Sciatic nerve (tissue), 2 donors: ENCODE measurements at regions of chr6 and their contacts with region 1.

Region 1: DNA sequence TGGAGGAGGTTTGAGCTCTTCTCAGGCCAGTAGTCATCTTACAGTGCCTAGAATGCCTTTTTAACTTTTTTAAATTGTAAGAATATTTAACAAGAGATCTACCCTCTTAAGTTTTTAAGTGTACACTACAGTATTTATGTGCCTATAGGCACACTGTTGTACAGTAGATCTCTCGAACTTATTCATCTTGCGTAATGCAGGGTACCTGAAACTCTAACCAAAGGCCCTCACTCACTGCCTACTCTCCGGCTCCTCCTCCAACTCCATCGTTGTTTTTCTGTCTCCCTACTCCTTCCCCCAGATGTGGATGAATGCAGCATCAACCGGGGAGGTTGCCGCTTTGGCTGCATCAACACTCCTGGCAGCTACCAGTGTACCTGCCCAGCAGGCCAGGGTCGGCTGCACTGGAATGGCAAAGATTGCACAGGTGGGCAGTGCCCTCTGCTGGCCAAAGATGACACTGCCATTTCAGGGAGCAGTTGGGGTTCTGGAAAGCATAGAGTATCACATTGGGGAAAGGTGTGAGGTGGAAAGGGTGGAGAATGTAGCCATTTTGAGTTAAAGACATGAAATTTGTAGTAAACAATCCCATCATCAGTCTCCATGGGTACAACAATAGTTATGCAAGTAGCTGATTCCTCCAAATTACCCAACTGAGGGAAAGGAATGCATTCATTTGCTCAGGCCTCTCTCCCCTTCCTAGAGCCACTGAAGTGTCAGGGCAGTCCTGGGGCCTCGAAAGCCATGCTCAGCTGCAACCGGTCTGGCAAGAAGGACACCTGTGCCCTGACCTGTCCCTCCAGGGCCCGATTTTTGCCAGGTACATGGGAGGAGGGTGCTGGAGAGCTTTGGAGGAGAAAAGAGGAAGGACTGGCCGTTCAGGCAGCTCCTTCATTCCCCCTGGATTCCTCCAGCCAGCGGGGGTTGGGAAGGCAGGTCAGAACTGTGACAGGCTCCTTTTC is 18.4 kb upstream of the ZNF76 start:
- DNase-seq: peak; percentile 86
- ATAC-seq: peak; percentile 78

Region 2: GRCh38 chr6:35199866-35200265 is 41.3 kb before region 1 on chr6:
- intact Hi-C with region 1: loop called (anchors 1 kb)
- DNase-seq: no peak
- ATAC-seq: peak; percentile 84

Region 3: DNA sequence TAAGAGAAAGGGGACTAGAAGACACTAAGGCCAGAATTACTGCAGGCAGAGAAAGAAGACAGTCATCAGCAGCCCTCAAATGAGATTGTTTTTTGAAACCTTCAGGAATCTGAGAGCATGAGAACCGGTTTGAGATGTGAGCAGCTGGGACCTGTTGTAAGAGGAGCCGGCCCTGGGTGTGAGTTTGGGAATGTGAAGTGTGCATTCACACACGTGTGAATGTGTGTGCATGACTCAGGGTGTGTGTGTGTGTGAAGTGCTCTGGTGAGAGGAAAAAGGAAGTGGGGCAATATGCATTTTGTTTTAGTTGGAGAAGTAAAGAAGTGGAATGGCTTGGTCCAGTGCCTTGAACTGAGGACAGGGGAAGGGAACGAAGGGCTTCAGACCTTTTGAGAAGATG is 23.1 kb before region 1 on chr6:
- intact Hi-C with region 1: no loop called
- DNase-seq: no peak
- ATAC-seq: no peak

Region 4: DNA sequence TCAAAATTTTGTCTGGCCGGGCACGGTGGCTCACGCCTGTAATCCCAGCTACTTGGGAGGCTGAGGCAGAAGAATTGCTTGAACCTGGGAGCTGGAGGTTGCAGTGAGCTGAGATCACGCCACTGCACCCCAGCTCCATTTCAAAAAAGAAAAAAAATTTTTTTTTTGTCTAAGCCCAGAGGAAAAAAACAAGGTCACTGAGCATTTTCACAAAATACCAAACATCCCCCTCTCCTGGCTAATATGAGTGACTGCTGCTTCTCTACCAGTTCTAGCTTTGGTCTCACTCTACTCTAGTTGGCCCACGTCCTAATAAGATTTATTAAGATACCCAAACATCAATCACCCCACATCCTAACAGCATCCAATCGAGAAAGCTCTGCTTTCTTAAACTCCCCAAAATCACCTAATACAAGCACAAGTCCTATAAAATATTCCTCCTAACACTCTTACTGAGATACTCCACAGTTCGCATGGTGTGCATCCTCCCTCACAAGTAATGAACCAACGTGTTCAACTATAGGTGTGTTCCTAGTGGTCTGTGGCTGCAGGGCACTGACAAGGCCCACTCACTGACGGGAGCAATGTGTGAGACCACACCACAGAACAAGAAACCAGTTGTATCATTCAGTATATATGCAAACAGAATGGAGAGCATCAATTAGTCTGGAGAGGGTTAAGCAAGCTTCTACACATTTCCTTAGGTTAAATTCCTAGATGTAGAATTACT is 383.4 kb after region 1 on chr6:
- intact Hi-C with region 1: no loop called
- DNase-seq: no peak
- ATAC-seq: peak; percentile 13